AG04449 (cell line): ENCODE measurements at regions of chr14 and their contacts with region 1.

Region 1: GRCh38 chr14:21103710-21104447 is 3.0 kb downstream of the TMEM253 start:
- DNase-seq: peak; percentile 71
- H3K4me3 ChIP-seq: peak overlapping the region; percentile 93
- CTCF ChIP-seq: peak; percentile 90

Region 2: GRCh38 chr14:20697273-20698017 is 406.4 kb before region 1 on chr14:
- CTCF ChIA-PET with region 1: interaction called, 10 read pairs
- POLR2A ChIA-PET with region 1: no interaction called
- DNase-seq: no peak
- H3K4me3 ChIP-seq: no peak overlapping the region
- CTCF ChIP-seq: peak; percentile 81

Region 3: DNA sequence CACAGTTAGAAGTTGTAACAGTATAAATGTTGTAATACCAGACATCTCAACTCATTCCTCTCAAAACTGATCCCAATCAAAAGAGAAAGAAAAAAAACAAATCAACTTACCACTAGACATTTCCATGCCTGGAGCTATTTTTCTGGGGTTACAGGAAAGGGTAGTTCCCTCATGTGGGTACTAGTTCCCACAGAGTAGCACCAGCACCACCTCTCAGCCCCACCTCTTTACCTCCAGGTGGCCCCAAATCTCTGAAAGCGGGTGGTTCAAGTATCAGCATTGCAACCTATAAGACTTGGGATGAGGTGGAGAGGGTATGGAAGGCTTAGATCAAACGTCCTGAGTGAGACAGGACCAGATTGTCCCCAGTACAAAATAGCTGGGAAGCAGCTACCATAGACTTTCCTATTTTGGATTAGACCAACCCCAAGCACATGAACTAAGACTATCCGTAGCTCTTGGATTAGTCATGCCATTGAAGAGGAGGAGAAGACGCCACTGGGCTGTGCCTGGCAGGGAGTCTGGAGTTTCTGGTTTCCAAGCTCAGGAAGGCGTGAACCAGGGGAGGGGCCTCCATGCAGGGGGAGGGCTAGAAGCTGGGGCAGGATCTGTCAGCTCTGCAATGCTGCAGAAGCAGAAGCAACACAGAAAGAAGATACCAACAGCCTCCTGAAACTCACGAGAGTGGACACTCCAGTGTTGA is 105.1 kb before region 1 on chr14 and contains the start of gene SLC39A2:
- CTCF ChIA-PET with region 1: interaction called, 48 read pairs
- POLR2A ChIA-PET with region 1: interaction called, 3 read pairs
- DNase-seq: peak; percentile 21
- H3K4me3 ChIP-seq: no peak within 1 kb of the TSS
- CTCF ChIP-seq: no peak

Region 4: DNA sequence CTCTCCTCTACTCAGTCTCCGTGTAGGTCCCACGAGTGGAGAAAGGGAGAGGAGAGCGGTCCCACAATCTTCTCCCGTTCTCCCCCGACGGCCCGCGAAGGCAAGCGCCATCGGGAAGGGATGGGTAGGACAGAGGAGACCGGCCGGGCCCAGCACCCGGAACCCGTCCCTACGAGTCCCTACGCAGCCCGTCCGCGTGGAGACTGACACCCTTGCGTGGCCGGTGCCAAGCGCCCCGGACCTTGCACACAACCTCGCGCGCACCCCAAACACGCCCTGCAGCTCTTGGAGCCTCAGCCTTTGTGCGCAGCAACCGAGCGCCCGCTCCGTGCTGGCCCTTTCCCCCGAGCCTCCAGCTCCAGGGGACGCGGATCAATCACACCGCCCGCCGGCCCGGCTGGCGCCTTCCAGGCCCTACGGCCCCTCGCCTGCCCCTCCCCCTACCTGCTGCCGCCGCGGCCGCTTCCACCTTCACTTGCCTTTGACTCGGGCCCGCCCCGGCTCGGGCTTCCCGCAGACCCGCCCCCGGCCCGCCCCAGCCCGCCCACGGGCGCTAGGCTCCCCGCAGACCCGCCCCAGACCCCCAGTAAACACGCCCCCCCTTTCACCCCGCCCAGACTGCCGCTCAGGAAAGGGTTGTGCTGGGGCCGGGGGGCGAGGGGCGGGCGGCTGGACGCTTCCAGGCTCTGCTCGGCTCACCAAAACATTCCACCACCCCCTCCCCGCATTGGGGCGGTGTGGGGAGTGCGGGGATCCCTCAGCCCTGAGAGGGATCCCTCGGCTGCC is 79.1 kb before region 1 on chr14 and contains the start of gene NDRG2:
- CTCF ChIA-PET with region 1: interaction called, 684 read pairs
- POLR2A ChIA-PET with region 1: no interaction called
- DNase-seq: no peak
- H3K4me3 ChIP-seq: peak within 1 kb of the TSS; percentile 43
- CTCF ChIP-seq: no peak

Region 5: GRCh38 chr14:21057803-21058675 is 45.8 kb before region 1 on chr14 and contains the start of gene RNASE8:
- CTCF ChIA-PET with region 1: interaction called, 58 read pairs
- POLR2A ChIA-PET with region 1: no interaction called
- DNase-seq: no peak
- H3K4me3 ChIP-seq: no peak within 1 kb of the TSS
- CTCF ChIP-seq: peak; percentile 36

Region 6: GRCh38 chr14:21084988-21085853 is 18.7 kb before region 1 on chr14:
- CTCF ChIA-PET with region 1: interaction called, 135 read pairs
- POLR2A ChIA-PET with region 1: interaction called, 3 read pairs
- DNase-seq: peak; percentile 72
- H3K4me3 ChIP-seq: no peak overlapping the region
- CTCF ChIP-seq: no peak

Region 7: GRCh38 chr14:21136024-21136423 is 32.1 kb after region 1 on chr14:
- CTCF ChIA-PET with region 1: interaction called, 14 read pairs
- POLR2A ChIA-PET with region 1: no interaction called
- DNase-seq: no peak
- H3K4me3 ChIP-seq: no peak overlapping the region
- CTCF ChIP-seq: peak; percentile 24

Region 8: DNA sequence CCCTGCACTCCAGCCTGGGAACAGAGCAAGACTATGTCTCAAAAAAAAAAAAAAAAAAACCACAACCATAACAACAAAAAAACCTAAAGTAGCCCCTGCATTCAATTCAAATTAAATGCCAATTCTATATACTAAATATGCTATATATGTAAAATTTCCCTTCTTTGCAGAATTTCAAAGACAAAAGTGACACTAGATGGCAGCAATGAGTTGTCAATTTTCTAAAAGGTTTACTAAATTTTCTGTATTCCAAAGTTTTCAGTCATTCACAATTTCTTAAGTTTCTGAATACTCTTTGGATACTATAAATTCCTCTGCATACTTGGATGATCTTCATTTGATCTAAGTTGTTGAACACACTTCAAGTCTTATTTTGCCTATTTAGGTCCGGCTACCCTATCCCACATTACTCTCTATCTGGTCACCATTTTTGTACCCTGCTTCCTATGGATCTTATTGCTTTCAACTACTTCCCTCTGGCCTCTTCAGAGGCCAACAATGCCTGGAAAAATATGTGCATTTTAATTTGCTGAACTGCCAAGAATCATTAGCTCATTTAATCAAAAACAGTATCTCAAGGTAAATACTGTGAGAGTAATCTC is 137.4 kb after region 1 on chr14:
- CTCF ChIA-PET with region 1: no interaction called
- POLR2A ChIA-PET with region 1: no interaction called
- DNase-seq: peak; percentile 14
- H3K4me3 ChIP-seq: no peak overlapping the region
- CTCF ChIP-seq: peak; percentile 14

Region 9: DNA sequence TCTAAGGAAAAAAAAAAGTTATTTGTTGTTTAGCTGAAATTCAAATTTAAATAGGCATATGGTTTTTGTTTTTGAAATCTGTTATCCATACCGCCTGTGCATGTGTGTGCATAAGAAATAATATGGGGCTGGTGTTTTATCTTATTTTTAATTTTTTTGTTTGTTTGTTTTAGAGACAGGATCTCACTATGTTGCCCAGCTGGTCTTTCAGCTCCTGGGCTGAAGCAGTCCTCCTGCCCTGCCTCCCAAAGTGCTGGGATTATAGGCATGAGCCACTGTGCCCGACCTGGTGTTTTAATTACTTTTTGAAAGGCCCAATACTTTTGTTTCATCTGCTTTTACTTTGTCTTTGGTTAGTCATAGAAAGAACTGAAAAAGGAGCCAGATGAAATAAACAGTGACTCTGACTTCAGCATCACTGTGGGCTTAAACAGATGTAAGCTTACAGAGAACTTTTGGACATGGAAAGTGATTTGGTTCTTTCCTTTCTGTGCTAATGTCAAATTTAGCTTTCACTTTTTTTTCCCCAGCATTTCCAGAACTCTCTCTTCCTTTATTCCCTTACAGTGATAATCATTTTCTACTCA is 242.8 kb after region 1 on chr14:
- CTCF ChIA-PET with region 1: no interaction called
- POLR2A ChIA-PET with region 1: no interaction called
- DNase-seq: peak; percentile 5
- H3K4me3 ChIP-seq: no peak overlapping the region
- CTCF ChIP-seq: no peak